ENCODE measurements at regions of chr3 and their contacts with region 1.

Region 1: GRCh38 chr3:194522579-194523046 is 35.8 kb upstream of the ATP13A3 start:
- DNase-seq: peak; percentile 82
- ATAC-seq: peak; percentile 10; the same call in 1 of the 2 replicates
- H3K4me3 ChIP-seq: no peak overlapping the region
- H3K27ac ChIP-seq: peak overlapping the region; percentile 75
- H3K4me1 ChIP-seq: peaks cover 28% of the 10 kb centered on the region
- H3K27me3 ChIP-seq: no peaks in the 10 kb centered on the region
- CTCF ChIP-seq: no peak

Region 2: DNA sequence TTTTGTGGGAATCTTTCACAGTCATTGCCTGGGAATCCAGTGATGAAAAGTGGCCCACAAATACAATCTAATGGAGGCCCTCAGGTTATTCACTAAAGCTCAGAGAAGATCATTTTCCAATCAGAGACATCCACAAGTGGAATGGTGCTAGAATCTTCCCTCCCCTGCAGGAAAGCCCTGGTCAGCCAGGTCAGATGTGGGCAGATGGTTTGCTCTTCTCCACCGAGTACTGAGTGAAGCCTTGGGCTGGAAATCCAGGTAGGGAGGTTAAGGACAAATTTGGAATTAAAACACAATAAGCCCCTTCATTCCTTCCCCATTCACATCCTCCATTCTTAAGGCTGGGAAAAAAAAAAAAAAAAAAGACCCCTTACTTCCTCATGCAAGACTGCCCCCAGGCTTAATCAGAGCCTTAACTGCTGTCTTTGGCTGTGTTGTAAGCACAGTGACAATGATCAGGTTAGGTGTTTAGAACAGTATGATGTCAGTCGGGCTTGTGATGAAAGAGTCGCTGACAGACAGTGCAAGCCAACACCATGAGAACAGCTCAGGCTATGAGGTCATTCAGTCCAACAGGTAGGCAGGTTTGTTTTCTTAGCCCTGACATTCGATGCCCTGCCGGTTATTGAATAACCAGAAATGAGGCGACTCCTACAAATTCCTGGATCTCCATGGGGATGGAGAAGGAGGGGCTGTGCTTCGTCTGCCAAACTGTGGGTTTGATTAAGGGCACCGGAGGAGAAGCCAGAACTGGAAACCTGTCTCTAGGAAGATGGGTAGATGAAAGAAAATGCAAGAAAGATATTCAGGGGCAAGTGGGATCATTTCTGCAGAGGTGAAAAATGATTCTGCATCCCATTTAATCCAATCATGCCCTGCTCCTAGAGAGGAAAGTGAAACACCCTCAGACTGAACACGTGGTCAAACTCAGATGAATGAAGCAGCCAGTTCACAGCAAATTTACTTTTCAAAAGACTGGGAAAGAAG is 410.2 kb before region 1 on chr3:
- CTCF ChIA-PET with region 1: no interaction called
- POLR2A ChIA-PET with region 1: no interaction called
- intact Hi-C with region 1: no loop called
- DNase-seq: peak; percentile 92
- ATAC-seq: peak; percentile 93
- H3K4me3 ChIP-seq: peak overlapping the region; percentile 12; the same call in 1 of the 2 replicates
- H3K27ac ChIP-seq: peak overlapping the region; percentile 56
- H3K4me1 ChIP-seq: peaks cover 13% of the 10 kb centered on the region
- H3K27me3 ChIP-seq: no peaks in the 10 kb centered on the region
- CTCF ChIP-seq: no peak

Region 3: DNA sequence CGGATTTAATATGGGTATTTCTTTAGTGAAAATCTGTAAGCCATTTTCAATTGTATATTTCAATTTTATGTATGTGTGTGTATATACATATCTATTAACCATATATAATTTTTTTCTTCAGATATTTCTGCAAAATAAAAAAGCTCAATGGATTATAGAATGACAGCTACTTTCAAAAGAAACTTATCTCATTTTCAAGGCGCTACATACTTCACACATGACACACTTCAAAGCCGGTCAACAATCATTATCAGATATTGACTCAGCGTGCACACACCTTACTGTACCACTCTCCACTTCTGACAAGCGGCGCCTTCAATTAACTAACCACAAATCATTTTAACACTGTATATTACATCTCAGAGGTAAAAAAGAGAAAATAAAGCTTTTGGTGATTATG is 75.5 kb before region 1 on chr3:
- CTCF ChIA-PET with region 1: no interaction called
- POLR2A ChIA-PET with region 1: interaction called, 16 read pairs
- intact Hi-C with region 1: no loop called
- DNase-seq: no peak
- ATAC-seq: no peak
- H3K4me3 ChIP-seq: no peak overlapping the region
- H3K27ac ChIP-seq: no peak overlapping the region
- H3K4me1 ChIP-seq: peaks cover 16% of the 10 kb centered on the region
- H3K27me3 ChIP-seq: no peaks in the 10 kb centered on the region
- CTCF ChIP-seq: no peak

Region 4: DNA sequence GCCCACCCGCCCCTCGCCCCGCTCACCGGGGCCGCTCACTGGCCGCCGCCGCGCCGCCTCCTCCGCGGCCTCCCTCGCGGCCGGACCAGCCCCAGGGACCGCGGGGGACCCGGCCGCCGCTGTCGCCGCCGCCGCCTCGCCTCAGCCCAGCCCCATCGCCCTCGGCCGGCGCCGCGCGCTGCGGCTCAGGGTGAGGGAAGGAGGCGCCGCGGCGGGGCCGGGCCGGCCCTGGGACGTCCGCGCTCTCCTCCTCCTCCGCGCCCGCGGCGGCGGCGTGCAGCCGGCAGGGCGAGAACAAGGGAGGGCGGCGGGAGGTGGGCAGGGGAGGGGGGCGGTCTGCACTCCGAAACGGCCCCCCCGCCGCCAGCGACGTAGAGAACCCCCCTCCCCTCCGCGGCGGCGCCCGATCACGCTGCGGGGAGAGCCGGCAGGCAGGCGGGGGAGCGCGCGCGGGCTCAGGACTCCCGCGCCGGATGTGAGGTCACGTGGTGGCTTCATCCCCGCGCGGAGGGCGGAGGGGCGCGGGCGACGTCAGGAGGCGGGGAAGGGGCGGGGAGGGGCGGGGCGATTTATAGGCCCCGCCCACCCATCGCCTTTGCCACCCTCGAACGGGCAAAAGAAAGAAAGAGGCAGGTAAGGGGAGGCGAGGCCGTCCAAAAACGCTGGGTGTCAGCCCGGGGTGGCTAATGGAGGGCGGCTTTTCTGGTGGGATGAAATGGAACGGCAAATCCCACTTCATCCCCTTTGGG is 35.9 kb before region 1 on chr3 and contains the start of gene ATP13A3:
- CTCF ChIA-PET with region 1: no interaction called
- POLR2A ChIA-PET with region 1: no interaction called
- intact Hi-C with region 1: no loop called
- DNase-seq: peak; percentile 91
- ATAC-seq: peak; percentile 74
- H3K4me3 ChIP-seq: peak within 1 kb of the TSS; percentile 92
- H3K27ac ChIP-seq: peak within 1 kb of the TSS; percentile 24
- H3K4me1 ChIP-seq: peaks cover 33% of the 10 kb centered on the region
- H3K27me3 ChIP-seq: no peaks in the 10 kb centered on the region
- CTCF ChIP-seq: no peak
- total RNA-seq, gene ATP13A3: 69.4 and 101 TPM in 2 replicates

Region 5: DNA sequence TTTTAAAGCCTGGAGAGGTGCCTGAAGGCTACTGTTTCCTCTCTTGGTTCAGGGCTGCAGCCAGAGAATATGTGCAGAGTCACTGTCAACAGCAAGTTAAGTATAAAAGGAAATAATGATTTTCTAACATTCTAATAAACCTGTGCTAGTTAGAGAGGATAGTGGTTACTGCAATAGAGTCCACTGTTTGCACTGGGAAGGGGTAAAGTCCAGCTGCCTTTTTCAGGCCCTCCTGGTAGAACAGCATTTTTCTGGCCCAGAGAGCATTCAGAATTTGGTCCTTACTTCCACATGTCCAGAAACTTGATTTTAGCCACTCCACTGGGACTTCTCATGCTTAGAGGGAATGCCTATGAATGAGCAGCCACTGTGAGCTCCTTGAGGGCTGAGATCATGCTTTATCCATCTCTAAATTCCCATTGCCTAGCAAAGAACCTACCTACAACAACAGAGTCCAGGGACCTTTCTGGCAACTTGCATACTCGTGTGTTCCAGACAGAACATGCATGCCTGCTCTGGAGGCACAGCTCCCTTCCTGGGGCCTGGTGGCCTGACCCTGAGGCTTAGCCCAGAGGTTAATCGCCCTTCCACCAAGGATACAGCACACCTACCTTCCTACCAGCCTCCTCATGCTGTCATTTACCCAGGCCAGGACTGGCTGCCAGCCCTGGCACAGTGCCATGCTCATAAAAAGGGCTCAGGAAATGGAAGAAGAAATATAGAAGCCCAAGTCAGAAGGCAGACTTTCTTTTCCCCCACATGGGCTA is 14.4 kb after region 1 on chr3:
- CTCF ChIA-PET with region 1: no interaction called
- POLR2A ChIA-PET with region 1: interaction called, 23 read pairs
- intact Hi-C with region 1: loop called (anchors 1 kb)
- DNase-seq: peak; percentile 91
- ATAC-seq: peak; percentile 80
- H3K4me3 ChIP-seq: peak overlapping the region; percentile 15; the same call in 1 of the 2 replicates
- H3K27ac ChIP-seq: peak overlapping the region; percentile 69
- H3K4me1 ChIP-seq: peaks cover 15% of the 10 kb centered on the region
- H3K27me3 ChIP-seq: no peaks in the 10 kb centered on the region
- CTCF ChIP-seq: no peak

Measured in PC-3 (cell line).